ENCODE measurements at regions of chr17 and their contacts with region 1.

Region 1: GRCh38 chr17:31524926-31525800 is 133.7 kb downstream of the RAB11FIP4 start:
- DNase-seq: peak; percentile 75 to 93 (median 88)
- ATAC-seq: peak; percentile 73
- H3K4me3 ChIP-seq: no peak overlapping the region
- H3K4me3 Mint-ChIP-seq: no peak overlapping the region
- H3K27ac ChIP-seq: no peak overlapping the region
- H3K27ac Mint-ChIP-seq: no peak overlapping the region
- H3K4me1 ChIP-seq: no peaks in the 10 kb centered on the region
- H3K4me1 Mint-ChIP-seq: no peaks in the 10 kb centered on the region
- H3K27me3 ChIP-seq: no peaks in the 10 kb centered on the region
- H3K27me3 Mint-ChIP-seq: no peaks in the 10 kb centered on the region
- CTCF ChIP-seq: peak; percentile 97

Region 2: GRCh38 chr17:31015639-31016038 is 509.5 kb before region 1 on chr17:
- CTCF ChIA-PET with region 1: no interaction called
- POLR2A ChIA-PET with region 1: no interaction called
- intact Hi-C with region 1: loop called in 1 of 2 experiments (anchors 10 kb)
- DNase-seq: no peak
- ATAC-seq: no peak
- H3K4me3 ChIP-seq: no peak overlapping the region
- H3K4me3 Mint-ChIP-seq: no peak overlapping the region
- H3K27ac ChIP-seq: no peak overlapping the region
- H3K27ac Mint-ChIP-seq: no peak overlapping the region
- H3K4me1 ChIP-seq: no peaks in the 10 kb centered on the region
- H3K4me1 Mint-ChIP-seq: no peaks in the 10 kb centered on the region
- H3K27me3 ChIP-seq: no peaks in the 10 kb centered on the region
- H3K27me3 Mint-ChIP-seq: no peaks in the 10 kb centered on the region
- CTCF ChIP-seq: no peak

Region 3: GRCh38 chr17:31388770-31389661 is 136.1 kb before region 1 on chr17:
- CTCF ChIA-PET with region 1: interaction called, 5 read pairs
- POLR2A ChIA-PET with region 1: no interaction called
- intact Hi-C with region 1: loop called (anchors 1 kb)
- DNase-seq: peak in 12 of 14 experiments; percentile 13 to 68 (median 42)
- ATAC-seq: peak; percentile 48
- H3K4me3 ChIP-seq: no peak overlapping the region
- H3K4me3 Mint-ChIP-seq: no peak overlapping the region
- H3K27ac ChIP-seq: no peak overlapping the region
- H3K27ac Mint-ChIP-seq: no peak overlapping the region
- H3K4me1 ChIP-seq: peaks cover 16% of the 10 kb centered on the region
- H3K4me1 Mint-ChIP-seq: peaks cover 6% of the 10 kb centered on the region
- H3K27me3 ChIP-seq: peaks cover 25 to 28% of the 10 kb centered on the region in 2 experiments
- H3K27me3 Mint-ChIP-seq: peaks cover 39% of the 10 kb centered on the region
- CTCF ChIP-seq: peak; percentile 65

Region 4: GRCh38 chr17:31433091-31433790 is 91.9 kb before region 1 on chr17:
- CTCF ChIA-PET with region 1: interaction called, 24 read pairs
- POLR2A ChIA-PET with region 1: interaction called, 4 read pairs
- intact Hi-C with region 1: loop called (anchors 1 kb)
- DNase-seq: peak; percentile 19 to 76 (median 34)
- ATAC-seq: peak; percentile 92
- H3K4me3 ChIP-seq: no peak overlapping the region
- H3K4me3 Mint-ChIP-seq: peak overlapping the region; percentile 3
- H3K27ac ChIP-seq: no peak overlapping the region
- H3K27ac Mint-ChIP-seq: peak overlapping the region; percentile 11
- H3K4me1 ChIP-seq: peaks cover 30% of the 10 kb centered on the region
- H3K4me1 Mint-ChIP-seq: peaks cover 13% of the 10 kb centered on the region
- H3K27me3 ChIP-seq: peaks cover 0 to 5% of the 10 kb centered on the region in 2 experiments
- H3K27me3 Mint-ChIP-seq: peaks cover 11% of the 10 kb centered on the region
- CTCF ChIP-seq: no peak

Region 5: DNA sequence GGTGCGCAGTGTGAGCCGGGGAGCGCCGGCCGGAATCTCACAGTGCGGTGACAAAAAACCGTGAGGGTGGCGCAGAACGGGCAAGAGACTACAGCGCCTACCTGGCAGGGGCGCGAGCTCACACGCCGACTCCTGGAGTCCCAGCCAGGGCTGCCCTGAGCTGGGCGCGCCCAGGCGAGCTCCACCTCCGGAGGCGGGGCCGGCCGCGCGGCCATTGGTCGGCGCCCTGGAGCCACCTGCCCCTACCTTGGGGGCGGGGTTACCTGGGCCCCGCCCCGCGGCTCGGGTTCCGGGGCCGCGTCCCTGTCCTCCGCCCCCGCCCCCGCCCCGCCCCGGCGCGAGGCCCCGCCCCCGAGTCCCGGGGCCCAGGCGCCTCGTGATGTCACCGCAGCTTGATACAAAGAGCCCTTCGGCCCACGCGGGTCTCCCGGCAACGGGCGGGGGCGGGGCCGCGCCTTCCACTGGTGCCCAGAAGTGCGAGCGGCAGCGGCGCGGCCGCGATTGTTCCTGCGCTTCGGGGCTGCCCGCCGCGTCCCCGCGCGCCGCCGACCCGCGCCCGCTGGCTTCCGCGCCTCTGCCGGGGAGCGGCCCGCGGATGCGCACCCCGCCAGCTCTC is 37.4 kb before region 1 on chr17:
- CTCF ChIA-PET with region 1: interaction called, 4 read pairs
- POLR2A ChIA-PET with region 1: interaction called, 12 read pairs
- intact Hi-C with region 1: loop called (anchors 5 kb)
- DNase-seq: peak; percentile 89 to 99 (median 96)
- ATAC-seq: peak; percentile 91
- H3K4me3 ChIP-seq: peak overlapping the region; percentile 92
- H3K4me3 Mint-ChIP-seq: peak overlapping the region; percentile 92
- H3K27ac ChIP-seq: peak overlapping the region; percentile 63 to 77
- H3K27ac Mint-ChIP-seq: peak overlapping the region; percentile 86
- H3K4me1 ChIP-seq: peaks cover 53% of the 10 kb centered on the region
- H3K4me1 Mint-ChIP-seq: peaks cover 53% of the 10 kb centered on the region
- H3K27me3 ChIP-seq: no peaks in the 10 kb centered on the region
- H3K27me3 Mint-ChIP-seq: no peaks in the 10 kb centered on the region
- CTCF ChIP-seq: peak; percentile 10

Region 6: GRCh38 chr17:31645351-31645750 is 120.2 kb after region 1 on chr17:
- CTCF ChIA-PET with region 1: no interaction called
- POLR2A ChIA-PET with region 1: no interaction called
- intact Hi-C with region 1: no loop called
- DNase-seq: no peak
- ATAC-seq: no peak
- H3K4me3 ChIP-seq: no peak overlapping the region
- H3K4me3 Mint-ChIP-seq: no peak overlapping the region
- H3K27ac ChIP-seq: no peak overlapping the region
- H3K27ac Mint-ChIP-seq: no peak overlapping the region
- H3K4me1 ChIP-seq: no peaks in the 10 kb centered on the region
- H3K4me1 Mint-ChIP-seq: no peaks in the 10 kb centered on the region
- H3K27me3 ChIP-seq: peaks cover 4 to 6% of the 10 kb centered on the region in 2 experiments
- H3K27me3 Mint-ChIP-seq: peaks cover 23% of the 10 kb centered on the region
- CTCF ChIP-seq: no peak

Region 7: DNA sequence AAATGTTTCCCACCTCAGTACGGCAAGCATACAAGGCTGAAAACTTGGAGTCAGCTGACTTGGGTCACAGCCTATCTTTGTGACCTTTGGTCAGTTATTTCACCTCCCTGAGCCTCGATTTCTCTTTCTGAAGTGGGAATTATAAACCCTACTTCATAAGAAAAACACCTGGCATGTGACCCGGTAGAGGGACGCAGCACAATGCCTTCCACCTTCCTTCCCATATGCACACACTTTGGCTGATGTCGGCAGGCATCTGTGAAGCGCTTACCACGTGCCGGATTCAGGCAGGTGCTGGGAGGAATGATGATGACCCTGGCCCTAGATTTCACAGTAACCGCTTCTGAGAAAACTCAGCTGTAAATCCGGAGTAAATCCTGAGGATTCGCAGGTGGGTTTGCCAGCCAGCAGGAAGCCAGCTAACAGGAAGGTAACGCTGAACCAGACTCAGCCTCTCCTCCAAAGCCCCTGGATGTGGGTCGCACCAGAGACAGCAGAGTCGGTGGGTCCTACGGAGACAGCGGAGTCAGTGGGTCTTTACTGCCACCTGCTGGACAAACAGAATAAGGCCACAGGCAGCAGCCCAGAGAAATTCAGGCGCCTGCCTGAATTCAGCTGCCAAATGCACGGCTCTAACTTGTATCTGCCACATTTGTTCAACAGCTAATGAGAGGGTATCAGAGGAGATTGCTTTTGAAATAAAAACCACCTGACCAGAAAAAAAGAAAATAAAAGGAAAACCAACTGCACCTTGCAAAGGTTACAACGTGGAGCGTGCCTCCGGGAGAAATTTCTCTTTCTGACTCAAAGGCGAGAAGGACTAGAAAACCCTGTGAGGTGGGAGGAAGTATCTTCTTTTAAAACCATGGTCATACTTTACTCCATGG is 317.3 kb after region 1 on chr17:
- CTCF ChIA-PET with region 1: no interaction called
- POLR2A ChIA-PET with region 1: no interaction called
- intact Hi-C with region 1: loop called in 1 of 2 experiments (anchors 2 kb)
- DNase-seq: peak; percentile 39 to 84 (median 50)
- ATAC-seq: peak; percentile 92
- H3K4me3 ChIP-seq: no peak overlapping the region
- H3K4me3 Mint-ChIP-seq: no peak overlapping the region
- H3K27ac ChIP-seq: no peak overlapping the region
- H3K27ac Mint-ChIP-seq: no peak overlapping the region
- H3K4me1 ChIP-seq: peaks cover 9% of the 10 kb centered on the region
- H3K4me1 Mint-ChIP-seq: no peaks in the 10 kb centered on the region
- H3K27me3 ChIP-seq: peaks cover 7 to 11% of the 10 kb centered on the region in 2 experiments
- H3K27me3 Mint-ChIP-seq: peaks cover 5% of the 10 kb centered on the region
- CTCF ChIP-seq: peak; percentile 91